Caco-2 (cell line): ENCODE measurements at regions of chr22 and their contacts with region 1.

Region 1: GRCh38 chr22:37225481-37225880 is 13.2 kb upstream of the SSTR3 start:
- DNase-seq: peak in 1 of 2 experiments; percentile 19
- H3K4me3 ChIP-seq: no peak overlapping the region
- H3K4me3 Mint-ChIP-seq: no peak overlapping the region
- H3K27ac Mint-ChIP-seq: no peak overlapping the region
- H3K4me1 ChIP-seq: no peaks in the 10 kb centered on the region
- H3K4me1 Mint-ChIP-seq: no peaks in the 10 kb centered on the region
- H3K27me3 ChIP-seq: no peaks in the 10 kb centered on the region
- H3K27me3 Mint-ChIP-seq: no peaks in the 10 kb centered on the region
- CTCF ChIP-seq: peak in 1 of 2 experiments; percentile 30

Region 2: DNA sequence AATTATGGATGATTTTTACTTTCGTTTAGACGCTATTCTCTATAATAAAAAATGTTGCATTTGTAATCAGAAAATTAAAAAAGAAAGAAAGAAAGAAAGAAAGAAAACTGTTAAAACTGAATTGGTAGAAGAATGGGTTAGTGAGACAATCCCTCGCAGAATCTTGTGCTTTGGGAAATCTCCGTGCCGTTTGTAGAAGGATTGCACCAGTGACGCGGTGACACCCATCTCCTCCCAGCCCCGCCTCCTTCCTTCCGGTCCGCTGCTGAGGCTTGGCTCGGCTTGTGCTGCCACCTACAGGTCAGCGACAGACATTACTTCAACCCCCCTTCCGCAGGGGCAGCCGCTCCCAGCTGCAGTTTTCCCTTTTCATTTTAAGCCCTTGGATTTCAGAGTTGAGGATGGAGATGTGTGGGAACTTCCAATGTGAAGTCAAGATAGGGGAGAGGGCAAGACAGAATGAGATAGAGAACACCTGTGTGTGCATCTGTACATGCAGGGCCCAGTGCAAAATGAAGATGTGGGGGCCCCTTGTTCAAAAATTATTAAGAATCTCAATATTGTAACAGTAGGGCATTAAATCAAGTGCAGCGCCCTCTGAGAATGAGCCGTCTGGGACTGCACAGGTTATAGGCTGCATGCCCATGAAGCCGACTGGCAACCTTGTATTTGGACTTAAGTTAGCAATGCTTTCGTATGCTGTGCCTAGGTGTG is 247.4 kb before region 1 on chr22:
- CTCF ChIA-PET with region 1: no interaction called
- POLR2A ChIA-PET with region 1: no interaction called
- intact Hi-C with region 1: no loop called
- DNase-seq: peak; percentile 85 to 90
- H3K4me3 ChIP-seq: peak overlapping the region; percentile 24
- H3K4me3 Mint-ChIP-seq: peak overlapping the region; percentile 69
- H3K27ac Mint-ChIP-seq: peak overlapping the region; percentile 26
- H3K4me1 ChIP-seq: no peaks in the 10 kb centered on the region
- H3K4me1 Mint-ChIP-seq: no peaks in the 10 kb centered on the region
- H3K27me3 ChIP-seq: no peaks in the 10 kb centered on the region
- H3K27me3 Mint-ChIP-seq: peaks cover 11% of the 10 kb centered on the region
- CTCF ChIP-seq: peak; percentile 82 to 86

Region 3: GRCh38 chr22:37212167-37212906 is 13.1 kb before region 1 on chr22 and contains the start of gene SSTR3:
- CTCF ChIA-PET with region 1: no interaction called
- POLR2A ChIA-PET with region 1: no interaction called
- intact Hi-C with region 1: no loop called
- DNase-seq: no peak
- H3K4me3 ChIP-seq: no peak within 1 kb of the TSS
- H3K4me3 Mint-ChIP-seq: no peak within 1 kb of the TSS
- H3K27ac Mint-ChIP-seq: no peak within 1 kb of the TSS
- H3K4me1 ChIP-seq: no peaks in the 10 kb centered on the region
- H3K4me1 Mint-ChIP-seq: peaks cover 5% of the 10 kb centered on the region
- H3K27me3 ChIP-seq: no peaks in the 10 kb centered on the region
- H3K27me3 Mint-ChIP-seq: peaks cover 6% of the 10 kb centered on the region
- CTCF ChIP-seq: no peak
- total RNA-seq, gene SSTR3: not detected in 2 replicates

Region 4: GRCh38 chr22:37260901-37261336 is 35.4 kb after region 1 on chr22:
- CTCF ChIA-PET with region 1: interaction called, 10 read pairs
- POLR2A ChIA-PET with region 1: no interaction called
- intact Hi-C with region 1: loop called (anchors 1 kb)
- DNase-seq: peak; percentile 65 to 67
- H3K4me3 ChIP-seq: no peak overlapping the region
- H3K4me3 Mint-ChIP-seq: no peak overlapping the region
- H3K27ac Mint-ChIP-seq: no peak overlapping the region
- H3K4me1 ChIP-seq: no peaks in the 10 kb centered on the region
- H3K4me1 Mint-ChIP-seq: no peaks in the 10 kb centered on the region
- H3K27me3 ChIP-seq: no peaks in the 10 kb centered on the region; the same call in 1 of the 2 replicates
- H3K27me3 Mint-ChIP-seq: peaks cover 6% of the 10 kb centered on the region
- CTCF ChIP-seq: peak; percentile 85 to 90